HEK293 (cell line): ENCODE measurements at regions of chr4 and their contacts with region 1.

Region 1: DNA sequence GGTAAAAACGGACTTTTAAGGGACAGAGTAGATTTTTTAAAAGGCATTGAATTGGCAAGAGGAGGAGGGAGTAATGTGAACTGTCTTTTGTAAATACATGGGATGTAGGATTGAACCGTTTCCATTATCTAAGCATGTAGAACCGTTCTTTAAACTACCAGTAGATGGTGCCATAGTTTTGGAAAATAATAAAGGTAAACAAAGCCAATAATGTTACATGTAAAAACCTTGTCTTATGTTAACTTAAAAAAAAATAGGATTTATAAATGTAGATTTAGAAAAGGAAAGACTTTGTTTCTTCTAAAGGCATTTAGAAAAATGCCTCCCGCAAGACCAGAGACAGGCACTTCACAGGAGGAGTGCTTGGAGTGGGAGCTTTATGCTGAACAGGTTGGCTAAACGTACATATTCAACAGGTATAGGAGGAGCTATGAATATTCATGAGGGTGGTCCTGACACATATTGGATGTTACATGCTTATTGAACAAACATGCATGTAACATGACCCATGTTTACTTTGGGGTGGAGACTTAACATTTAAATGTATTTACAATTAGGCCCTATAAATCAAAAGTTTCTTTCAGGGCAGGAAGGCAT is 45.5 kb upstream of the FAM241A start:
- H3K4me3 ChIP-seq: no peak overlapping the region
- H3K27ac ChIP-seq: no peak overlapping the region
- H3K4me1 ChIP-seq: no peaks in the 10 kb centered on the region
- CTCF ChIP-seq: no peak; the same call in 1 of the 2 replicates

Region 2: DNA sequence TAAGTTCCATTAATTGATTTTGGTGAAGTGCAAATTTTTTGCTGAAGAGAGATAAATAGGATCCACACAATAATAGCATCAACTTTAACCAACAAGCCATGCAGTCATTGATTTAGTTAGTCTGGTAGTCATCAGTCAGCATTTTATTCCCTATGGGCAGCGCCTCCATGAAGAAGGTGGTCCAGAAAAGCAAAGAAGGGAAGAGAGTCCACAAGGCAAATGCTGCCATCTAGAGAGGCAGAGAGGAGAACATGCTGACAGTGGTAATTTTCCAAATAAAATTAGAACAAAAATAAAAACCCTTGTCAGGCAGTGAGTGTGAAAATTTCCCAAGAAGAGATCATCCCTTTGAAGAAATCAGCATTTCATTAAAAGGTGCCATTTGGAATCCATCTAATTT is 321.3 kb before region 1 on chr4:
- CTCF ChIA-PET with region 1: no interaction called
- POLR2A ChIA-PET with region 1: no interaction called
- H3K4me3 ChIP-seq: no peak overlapping the region
- H3K27ac ChIP-seq: no peak overlapping the region
- H3K4me1 ChIP-seq: peaks cover 7% of the 10 kb centered on the region; the same call in 1 of the 2 replicates
- CTCF ChIP-seq: peak; percentile 32; the same call in 1 of the 2 replicates

Region 3: GRCh38 chr4:112231779-112232713 is 132.2 kb after region 1 on chr4 and contains the start of gene AP1AR:
- CTCF ChIA-PET with region 1: interaction called, 67 read pairs
- POLR2A ChIA-PET with region 1: no interaction called
- H3K4me3 ChIP-seq: peak within 1 kb of the TSS; percentile 65
- H3K27ac ChIP-seq: peak within 1 kb of the TSS; percentile 72
- H3K4me1 ChIP-seq: no peaks in the 10 kb centered on the region
- CTCF ChIP-seq: peak; percentile 60; the same call in 1 of the 2 replicates

Region 4: DNA sequence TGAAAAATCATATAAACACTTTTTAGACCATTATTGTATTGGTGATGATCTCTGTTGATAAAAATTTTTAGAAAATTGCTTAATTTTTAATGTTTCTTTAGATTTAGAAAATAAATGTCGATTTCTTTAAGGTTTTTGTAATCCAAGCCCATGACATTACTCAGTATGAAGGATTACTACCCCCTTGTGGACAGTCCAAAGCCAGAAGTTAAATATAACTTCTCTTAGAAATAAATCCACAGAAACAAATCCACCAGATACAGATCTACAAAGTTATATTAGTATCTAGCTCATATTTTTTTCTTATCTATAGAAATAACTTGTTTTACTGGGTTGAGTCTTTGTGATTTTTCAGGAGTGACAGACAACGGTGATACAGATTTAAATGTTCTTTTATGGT is 167.0 kb after region 1 on chr4:
- CTCF ChIA-PET with region 1: interaction called, 11 read pairs
- POLR2A ChIA-PET with region 1: no interaction called
- H3K4me3 ChIP-seq: no peak overlapping the region
- H3K27ac ChIP-seq: no peak overlapping the region
- H3K4me1 ChIP-seq: no peaks in the 10 kb centered on the region
- CTCF ChIP-seq: no peak